Mammary epithelial cell (primary cell): ENCODE measurements at regions of chr18 and their contacts with region 1.

Region 1: DNA sequence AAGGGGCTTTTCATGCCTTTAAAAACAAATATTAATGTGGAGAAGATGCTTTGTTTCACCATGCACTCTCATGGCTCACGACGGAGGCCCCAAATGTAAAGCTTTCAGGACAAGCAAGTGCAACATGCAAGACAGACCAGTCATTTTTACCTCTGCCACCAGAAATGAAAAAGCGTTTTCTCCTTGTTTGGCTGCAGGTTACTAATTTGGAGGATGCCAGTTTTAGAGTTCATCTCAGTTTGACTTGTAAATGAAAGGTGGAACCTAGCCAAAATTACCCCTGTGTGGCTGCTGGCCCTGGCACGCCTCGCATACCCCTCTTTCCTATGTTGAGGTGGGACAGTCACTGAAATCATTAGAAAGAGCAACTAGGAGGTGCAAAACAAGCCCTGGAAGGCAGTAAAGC is 138.6 kb downstream of the BCL2 start:
- DNase-seq: no peak
- H3K4me3 ChIP-seq: no peak overlapping the region
- H3K27ac ChIP-seq: no peak overlapping the region
- H3K4me1 ChIP-seq: no peaks in the 10 kb centered on the region
- H3K27me3 ChIP-seq: peaks cover 7% of the 10 kb centered on the region
- CTCF ChIP-seq: no peak

Region 2: DNA sequence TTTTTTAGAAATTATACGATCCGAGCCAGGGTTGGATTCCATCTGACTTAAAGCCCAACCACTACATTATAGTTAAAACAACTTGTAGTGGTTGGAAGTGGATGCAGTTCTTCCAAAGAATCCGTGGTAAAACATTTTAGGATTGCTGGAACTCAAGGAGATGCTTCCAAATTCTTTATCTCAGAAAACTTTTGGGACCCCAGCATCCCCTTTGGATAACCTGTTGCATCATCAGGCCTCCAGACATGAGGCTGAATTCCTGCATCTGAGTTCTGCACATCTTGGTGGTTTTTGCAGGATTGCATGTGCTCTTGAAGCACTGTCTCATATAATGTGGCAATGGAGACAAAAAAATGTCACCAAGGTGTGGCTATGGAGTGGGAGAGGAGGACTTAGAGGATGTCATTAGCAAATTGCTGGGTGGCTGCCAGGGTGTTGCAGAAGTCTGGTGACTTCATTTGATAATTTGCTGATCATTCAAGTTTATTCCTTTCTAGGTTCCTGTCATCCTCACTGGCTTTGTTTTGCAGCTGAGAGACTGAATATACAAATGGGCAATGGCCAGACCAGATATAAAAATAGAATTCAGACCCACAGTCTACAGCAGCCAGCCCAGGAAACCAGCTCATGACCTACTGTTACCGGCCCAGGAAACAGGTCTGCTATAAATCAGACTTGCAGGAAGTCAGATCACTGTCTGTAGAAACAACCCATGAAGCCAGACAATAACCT is 69.1 kb before region 1 on chr18:
- CTCF ChIA-PET with region 1: no interaction called
- dilution Hi-C with region 1: loop called (anchors 5 kb)
- in situ Hi-C with region 1: no loop called
- intact Hi-C with region 1: no loop called
- DNase-seq: no peak
- H3K4me3 ChIP-seq: no peak overlapping the region
- H3K27ac ChIP-seq: no peak overlapping the region
- H3K4me1 ChIP-seq: no peaks in the 10 kb centered on the region
- H3K27me3 ChIP-seq: no peaks in the 10 kb centered on the region
- CTCF ChIP-seq: no peak

Region 3: GRCh38 chr18:63249771-63250170 is 68.8 kb after region 1 on chr18:
- CTCF ChIA-PET with region 1: no interaction called
- dilution Hi-C with region 1: no loop called
- in situ Hi-C with region 1: no loop called
- intact Hi-C with region 1: no loop called
- DNase-seq: no peak
- H3K4me3 ChIP-seq: no peak overlapping the region
- H3K27ac ChIP-seq: no peak overlapping the region
- H3K4me1 ChIP-seq: peaks cover 12% of the 10 kb centered on the region
- H3K27me3 ChIP-seq: no peaks in the 10 kb centered on the region
- CTCF ChIP-seq: no peak